Head of caudate nucleus (tissue), 42 donors: ENCODE measurements at regions of chr18 and their contacts with region 1.

Region 1: DNA sequence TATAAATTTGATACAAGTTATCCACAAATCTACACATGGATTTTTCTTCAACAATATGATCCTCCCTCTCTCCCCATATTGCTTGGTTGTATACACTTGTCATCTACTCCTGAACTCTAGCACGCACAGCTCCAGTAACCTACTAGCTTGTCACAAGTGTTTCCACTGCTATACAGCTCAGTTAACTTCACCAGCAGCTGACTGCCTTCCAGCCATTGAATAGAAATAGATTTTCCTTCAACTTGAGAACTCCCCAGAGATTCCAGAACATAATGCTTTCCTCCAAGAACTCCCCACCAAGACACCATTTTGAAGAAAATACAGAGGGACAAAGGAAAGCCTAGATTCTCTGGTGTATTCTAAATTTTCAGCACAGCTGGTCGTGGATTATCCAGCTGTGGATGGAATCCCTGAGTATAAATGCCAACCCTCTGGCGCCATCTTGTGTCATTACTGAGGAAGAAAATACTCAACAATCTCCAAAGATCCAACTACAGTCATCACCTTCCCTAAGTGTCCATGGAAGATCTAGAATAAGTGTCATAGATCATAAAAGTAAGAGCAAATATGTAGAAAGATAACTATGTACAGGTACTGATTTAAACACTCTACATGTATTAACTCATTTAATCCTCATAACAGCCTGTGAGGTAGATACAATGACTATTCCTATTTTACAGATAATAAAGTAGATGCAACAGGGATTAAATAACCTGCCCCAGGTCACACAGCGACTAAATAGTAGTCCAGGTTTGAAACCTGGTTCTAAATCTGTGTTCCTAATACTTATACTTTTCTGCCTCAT is 156.7 kb downstream of the ARHGAP28 start:
- DNase-seq: peak in 34 of 42 donors; percentile 22 to 80 (median 56)

Region 2: GRCh38 chr18:5868218-5869115 is 1017.7 kb before region 1 on chr18:
- intact Hi-C with region 1: loop called (anchors 10 kb)
- DNase-seq: peak in 40 of 42 donors; percentile 24 to 88 (median 68)

Region 3: GRCh38 chr18:6543330-6543908 is 342.8 kb before region 1 on chr18:
- intact Hi-C with region 1: loop called (anchors 2 kb)
- DNase-seq: no peak